ENCODE measurements at regions of chr2 and their contacts with region 1.

Region 1: DNA sequence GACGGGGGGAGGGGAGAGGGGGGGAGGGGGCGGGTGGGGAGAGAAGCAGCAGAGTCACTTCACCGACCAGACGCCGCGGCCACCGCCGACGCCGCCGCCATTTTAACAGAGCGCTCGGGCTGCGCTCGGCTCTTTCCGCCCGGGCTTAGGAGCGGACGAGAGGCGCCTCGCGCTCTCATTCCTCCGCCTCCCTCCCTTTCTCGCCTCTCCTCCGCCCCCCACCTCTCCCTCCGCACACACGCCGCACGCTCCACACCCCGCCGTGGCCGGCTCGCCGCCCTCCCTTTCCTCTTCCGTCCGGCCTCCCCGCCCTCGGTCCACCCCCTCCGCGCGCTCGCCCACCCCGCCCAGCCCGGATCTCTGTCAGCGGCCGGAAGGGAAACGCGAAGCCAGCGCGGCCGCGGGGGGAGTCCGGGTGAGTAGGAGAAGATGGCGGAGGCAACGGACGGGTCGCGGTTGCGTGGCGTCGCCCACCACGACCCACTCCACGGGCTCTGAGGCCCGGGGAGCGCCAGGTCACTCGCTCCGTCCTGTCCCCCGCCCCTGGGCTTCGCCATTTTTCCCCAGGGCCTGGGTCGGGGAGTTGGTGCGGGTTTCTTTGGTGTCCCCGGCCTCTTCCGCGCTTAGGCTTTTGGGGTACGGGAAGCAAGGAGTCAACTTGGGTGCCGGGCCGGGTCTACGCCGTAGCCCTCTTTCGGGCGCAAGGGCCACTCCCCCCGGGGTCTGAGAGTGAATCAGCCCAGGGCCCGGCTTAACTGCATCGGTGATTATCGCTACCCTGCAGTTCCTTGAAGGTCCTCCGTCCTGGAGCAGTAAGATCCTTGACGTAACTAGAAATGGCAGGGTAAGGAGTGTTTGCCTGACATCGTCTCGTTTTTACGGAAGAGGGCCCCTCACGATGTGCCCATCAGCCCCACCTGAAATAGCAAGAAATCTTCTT is at the start of gene USP34:
- DNase-seq: peak; percentile 83 to 96 (median 91)
- H3K4me3 ChIP-seq: peak within 1 kb of the TSS; percentile 58 to 99 (median 93)
- H3K27ac ChIP-seq: peak within 1 kb of the TSS; percentile 90 to 100 (median 98)
- H3K27me3 ChIP-seq: no peaks in the 10 kb centered on the region
- CTCF ChIP-seq: peak in 10 of 56 donors; percentile 7 to 24 (median 16)
- total RNA-seq, gene USP34: 122 to 224 (median 167) TPM

Region 2: DNA sequence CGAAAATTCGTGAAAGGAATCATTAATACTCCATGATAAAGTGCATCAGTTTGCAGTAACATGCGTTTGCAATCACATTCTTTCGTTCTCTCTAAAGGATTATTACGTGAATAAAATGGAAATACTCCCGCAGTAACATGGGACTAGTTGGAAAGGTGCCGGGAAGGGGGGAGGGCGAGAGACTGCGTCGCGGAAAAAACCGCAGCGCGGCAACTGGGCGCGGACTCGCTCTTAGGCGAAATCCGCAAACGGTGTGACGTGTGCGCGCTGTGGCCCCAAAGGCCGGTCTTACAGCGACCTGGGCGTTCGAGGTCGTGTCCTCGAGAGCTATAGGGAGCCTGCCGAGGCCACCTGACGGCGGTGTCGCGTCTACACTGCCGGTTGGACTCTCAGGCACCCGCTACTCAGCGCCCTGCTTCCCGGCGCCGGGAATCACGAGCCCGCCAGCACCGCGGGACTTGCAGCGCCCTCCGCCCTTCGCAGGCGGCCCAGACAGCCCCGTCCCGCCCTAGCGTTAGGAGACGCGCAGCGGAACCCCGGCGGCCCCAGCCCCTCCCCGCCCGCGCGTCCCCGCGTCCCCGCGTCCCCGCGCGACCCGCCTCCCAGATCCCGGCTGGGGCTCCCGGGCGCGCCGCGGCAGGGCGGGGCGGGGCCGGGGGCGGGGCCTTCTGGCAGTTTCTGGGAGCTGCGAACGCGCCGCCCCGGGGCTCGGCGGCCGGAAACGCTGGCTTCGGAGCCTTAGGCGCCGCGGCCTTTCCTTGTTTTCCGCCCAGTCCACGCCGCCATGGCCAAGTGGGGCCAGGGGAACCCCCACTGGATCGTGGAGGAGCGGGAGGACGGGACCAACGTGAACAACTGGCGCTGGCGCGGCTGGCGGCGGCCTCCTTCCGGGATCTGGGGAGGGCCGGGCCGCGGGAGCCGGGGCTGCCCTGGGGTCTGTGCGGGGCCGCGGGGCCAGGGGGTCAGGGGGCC is 294.2 kb before region 1 on chr2:
- intact Hi-C with region 1: loop called (anchors 5 kb)
- DNase-seq: peak; percentile 78 to 95 (median 88)
- H3K4me3 ChIP-seq: peak overlapping the region; percentile 69 to 98 (median 87)
- H3K27ac ChIP-seq: peak overlapping the region; percentile 96 to 100 (median 99)
- H3K27me3 ChIP-seq: no peaks in the 10 kb centered on the region
- CTCF ChIP-seq: peak in 42 of 56 donors; percentile 2 to 61 (median 34)

Region 3: DNA sequence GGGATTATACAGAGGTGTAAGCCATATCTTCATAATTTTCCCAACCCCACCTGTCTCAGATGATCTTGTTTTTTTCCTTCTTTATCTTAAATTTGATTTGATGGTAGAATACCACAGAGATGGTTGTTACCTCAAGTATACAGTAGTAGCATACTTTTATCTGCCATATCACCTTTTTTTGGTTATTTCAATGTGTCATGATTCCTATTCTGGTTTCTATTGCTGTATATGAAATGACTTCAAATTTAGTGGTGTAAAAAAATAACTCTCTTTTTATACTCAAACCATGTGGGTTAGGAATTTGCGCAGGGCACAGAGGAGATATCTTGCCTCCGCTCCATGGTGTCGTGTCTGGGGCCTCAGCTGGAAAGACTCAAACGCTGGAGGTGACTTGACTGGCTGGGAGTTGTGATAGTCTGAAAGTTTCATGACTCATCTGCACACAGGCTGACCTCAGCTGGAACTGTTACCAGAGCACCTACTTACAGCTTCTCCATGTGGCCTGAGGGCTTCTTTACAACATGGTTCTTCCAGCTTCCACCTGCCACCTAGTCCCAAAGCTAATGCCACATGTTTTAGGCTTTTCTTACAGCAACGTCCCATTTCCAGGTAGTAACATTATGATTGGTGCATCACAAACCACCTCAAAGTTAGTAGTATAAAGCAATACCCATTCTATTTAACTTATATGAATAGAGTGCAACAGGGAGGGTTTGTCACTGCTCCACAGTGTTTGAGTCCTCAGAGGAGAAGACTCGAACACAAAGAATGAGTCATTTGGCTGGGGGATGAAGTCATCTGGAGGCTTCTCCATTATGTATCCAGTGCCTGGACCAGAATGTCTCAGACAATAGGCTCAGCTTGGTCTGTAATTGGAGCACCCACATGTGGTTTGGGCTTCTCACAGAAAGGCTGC is 149.3 kb after region 1 on chr2:
- intact Hi-C with region 1: no loop called
- DNase-seq: no peak
- H3K4me3 ChIP-seq: no peak overlapping the region
- H3K27ac ChIP-seq: peak overlapping the region in 3 of 59 donors; percentile 14 to 39 (median 24)
- H3K27me3 ChIP-seq: no peaks in the 10 kb centered on the region
- CTCF ChIP-seq: no peak

Region 4: DNA sequence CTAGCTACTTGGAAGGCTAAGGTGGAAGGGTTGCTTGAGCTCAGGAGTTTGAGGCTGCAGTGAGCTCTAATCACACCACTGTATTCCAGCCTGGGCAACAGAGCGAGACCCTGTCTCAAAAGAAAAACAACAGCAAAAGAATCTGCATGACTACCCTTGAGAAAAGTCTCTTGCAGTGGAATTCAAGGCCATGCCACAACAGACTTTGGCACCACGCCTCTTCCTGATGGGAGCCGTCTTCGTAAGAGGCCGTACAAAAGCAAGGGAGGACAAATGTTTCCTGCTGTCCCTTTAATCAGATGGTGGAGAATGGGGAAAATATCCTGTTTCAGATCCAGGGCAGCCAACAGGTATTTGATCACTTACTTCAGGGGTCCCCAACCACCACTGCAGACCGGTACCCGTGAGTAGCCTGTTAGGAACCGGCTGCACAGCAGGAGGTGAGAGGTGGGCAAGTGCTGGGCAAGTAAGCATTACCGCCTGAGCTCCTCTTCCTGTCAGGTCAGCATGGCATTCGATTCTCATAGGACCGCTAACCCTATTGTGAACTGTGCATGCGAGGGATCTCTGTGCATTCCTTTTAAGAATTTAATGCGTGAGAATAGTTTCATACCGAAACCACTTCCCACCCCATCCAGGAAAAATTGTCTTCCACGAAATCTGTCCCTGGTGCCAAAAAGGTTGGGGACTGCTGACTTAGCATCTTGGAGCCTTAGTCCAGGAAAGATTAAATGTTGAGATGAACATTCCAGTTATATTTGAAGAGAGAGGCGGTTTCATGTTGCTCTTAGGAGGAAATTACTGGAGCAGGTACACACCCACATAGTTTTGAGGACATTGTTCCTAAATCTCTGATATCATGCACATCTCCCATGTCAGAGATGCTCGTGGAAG is 161.3 kb after region 1 on chr2:
- intact Hi-C with region 1: loop called in 1 of 2 experiments (anchors 10 kb)
- DNase-seq: no peak
- H3K4me3 ChIP-seq: no peak overlapping the region
- H3K27ac ChIP-seq: no peak overlapping the region
- H3K27me3 ChIP-seq: no peaks in the 10 kb centered on the region
- CTCF ChIP-seq: no peak

Region 5: GRCh38 chr2:61694312-61695274 is 223.4 kb after region 1 on chr2:
- intact Hi-C with region 1: loop called in 1 of 2 experiments (anchors 2 kb)
- DNase-seq: peak; percentile 87 to 94 (median 92)
- H3K4me3 ChIP-seq: peak overlapping the region; percentile 57 to 96 (median 86)
- H3K27ac ChIP-seq: peak overlapping the region; percentile 59 to 96 (median 90)
- H3K27me3 ChIP-seq: no peaks in the 10 kb centered on the region
- CTCF ChIP-seq: peak in 52 of 56 donors; percentile 32 to 82 (median 58)

Region 6: DNA sequence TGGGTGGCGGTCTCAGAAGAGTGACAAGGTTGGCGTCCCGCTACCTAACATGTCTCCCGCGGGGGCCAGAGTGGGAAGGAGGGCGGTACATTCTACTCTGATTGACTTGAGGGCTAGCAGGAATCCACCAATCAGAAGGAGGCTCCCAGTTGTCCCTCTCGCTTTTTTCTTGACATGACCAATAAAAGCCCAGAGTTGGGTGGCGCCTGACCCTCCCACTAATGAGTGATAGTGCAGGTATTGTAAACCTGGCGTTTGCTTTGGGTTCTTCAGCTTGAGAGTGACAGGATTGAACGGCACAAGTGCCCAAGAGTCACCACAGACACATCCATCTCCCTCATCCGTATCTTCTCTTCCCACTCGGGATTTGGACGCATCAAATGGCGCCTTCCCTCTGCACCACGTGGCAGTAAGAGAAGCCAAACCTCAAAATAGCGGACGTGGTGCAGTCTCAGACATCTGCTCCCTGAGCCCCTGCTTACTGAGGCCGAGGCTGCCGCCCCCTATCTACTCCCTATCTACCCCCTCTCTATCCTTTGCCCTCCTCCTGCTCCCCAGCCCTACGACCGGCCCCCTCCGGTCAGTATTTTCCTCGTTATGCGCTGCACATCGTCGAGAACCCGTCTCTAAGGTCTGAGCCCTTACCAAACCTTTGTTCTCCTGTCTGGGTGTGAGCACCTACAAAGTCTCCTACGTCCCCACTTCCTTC is 383.4 kb after region 1 on chr2:
- intact Hi-C with region 1: loop called in 1 of 2 experiments (anchors 10 kb)
- DNase-seq: peak; percentile 66 to 97 (median 94)
- H3K4me3 ChIP-seq: peak overlapping the region; percentile 39 to 100 (median 88)
- H3K27ac ChIP-seq: peak overlapping the region; percentile 60 to 97 (median 89)
- H3K27me3 ChIP-seq: no peaks in the 10 kb centered on the region
- CTCF ChIP-seq: peak in 9 of 56 donors; percentile 4 to 24 (median 11)

Measured in dorsolateral prefrontal cortex (tissue), 120 donors.